GM18951 (cell line): ENCODE measurements at regions of chrX and their contacts with region 1.

Region 1: DNA sequence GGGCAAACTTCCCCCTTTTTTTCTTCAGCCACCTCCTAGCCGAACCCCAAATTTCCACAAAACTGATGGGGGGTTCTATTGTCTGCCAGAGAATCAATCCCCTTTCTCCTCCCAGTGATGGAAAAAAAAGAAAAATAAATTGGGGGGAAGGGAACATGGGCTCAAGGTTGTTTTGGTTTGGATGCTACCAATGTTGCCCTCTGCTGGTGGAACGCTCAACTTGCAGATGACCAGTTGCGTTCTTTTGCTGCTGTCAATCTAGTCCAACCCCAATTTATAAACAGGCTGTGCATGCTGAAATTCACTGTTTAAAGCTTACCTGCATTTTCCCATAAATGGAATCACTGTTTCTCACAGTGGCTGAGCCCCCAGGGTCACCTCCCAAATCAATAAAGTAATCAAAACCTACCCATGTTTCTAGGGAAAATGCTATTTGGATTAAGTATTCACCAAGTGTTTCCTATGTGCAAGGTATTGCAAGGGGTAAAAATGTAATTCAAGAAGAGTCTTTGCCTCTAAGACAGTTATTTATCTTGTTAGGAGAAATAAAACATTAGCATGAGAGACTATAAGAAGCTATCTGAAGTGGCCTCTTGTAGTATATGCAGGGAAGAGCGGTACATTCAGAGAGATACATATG is 116.7 kb upstream of the TMEM164 start:
- POLR2A ChIP-seq: no peak

Region 2: GRCh38 chrX:109498434-109498833 is 387.8 kb before region 1 on chrX:
- in situ Hi-C with region 1: loop called (anchors 10 kb)
- POLR2A ChIP-seq: no peak

Region 3: GRCh38 chrX:109720947-109721346 is 165.3 kb before region 1 on chrX:
- in situ Hi-C with region 1: loop called (anchors 10 kb)
- POLR2A ChIP-seq: no peak